ENCODE measurements at regions of chr9 and their contacts with region 1.

Region 1: DNA sequence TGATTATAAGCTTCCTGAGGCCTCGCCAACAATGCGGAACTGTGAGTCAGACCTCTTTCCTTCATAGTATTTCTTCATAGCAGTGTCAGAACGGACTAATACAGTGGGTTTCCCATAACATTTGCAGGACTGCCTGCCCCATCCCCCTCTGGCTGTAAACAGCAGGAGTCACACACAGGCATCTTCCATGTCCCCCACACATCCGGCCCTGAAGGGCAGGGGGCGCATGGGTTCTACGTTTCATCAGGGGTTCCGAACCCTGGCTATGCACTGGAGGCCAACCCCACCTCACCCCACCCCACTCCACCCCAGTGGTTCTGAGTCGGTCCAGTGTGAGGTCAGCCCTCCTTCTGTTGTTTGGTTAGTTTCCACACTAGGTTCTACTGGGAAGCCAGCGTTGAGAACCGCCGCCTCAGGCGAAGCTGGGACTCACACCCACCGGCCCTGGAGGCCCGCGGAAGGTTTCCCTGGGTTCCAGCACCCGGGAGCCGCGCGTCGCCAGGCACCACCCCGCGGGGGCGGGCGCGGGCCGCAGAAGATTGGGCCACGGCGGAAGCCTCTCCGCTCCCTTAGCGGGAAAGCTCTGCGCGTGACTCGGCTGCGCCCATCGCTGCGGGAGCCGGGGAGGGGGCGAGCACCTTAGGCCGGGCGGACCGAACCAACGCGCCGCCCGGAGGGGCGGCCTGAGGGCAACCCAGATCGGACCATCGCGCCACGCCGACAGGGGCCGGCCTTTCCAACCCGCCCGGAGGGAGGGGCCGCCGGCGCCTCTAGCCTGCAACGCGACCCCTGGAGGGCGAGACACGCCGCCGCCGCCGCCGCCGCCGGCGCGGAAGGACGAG is at the start of gene RUSC2:
- DNase-seq: peak; percentile 67
- H3K4me3 ChIP-seq: peak within 1 kb of the TSS; percentile 60 to 69
- H3K27ac ChIP-seq: peak within 1 kb of the TSS; percentile 84 to 91
- H3K4me1 ChIP-seq: no peaks in the 10 kb centered on the region
- H3K27me3 ChIP-seq: no peaks in the 10 kb centered on the region
- CTCF ChIP-seq: peak in 3 of 4 experiments; percentile 30 to 47 (median 44)
- POLR2A ChIP-seq: peak; percentile 67
- total RNA-seq, gene RUSC2: 13.6 to 33.1 TPM

Region 2: GRCh38 chr9:34899535-34900158 is 589.9 kb before region 1 on chr9:
- intact Hi-C with region 1: loop called (anchors 10 kb)
- DNase-seq: peak; percentile 67
- H3K4me3 ChIP-seq: no peak overlapping the region
- H3K27ac ChIP-seq: no peak overlapping the region
- H3K4me1 ChIP-seq: no peaks in the 10 kb centered on the region
- H3K27me3 ChIP-seq: no peaks in the 10 kb centered on the region
- CTCF ChIP-seq: peak; percentile 46 to 83 (median 70)
- POLR2A ChIP-seq: no peak

Region 3: DNA sequence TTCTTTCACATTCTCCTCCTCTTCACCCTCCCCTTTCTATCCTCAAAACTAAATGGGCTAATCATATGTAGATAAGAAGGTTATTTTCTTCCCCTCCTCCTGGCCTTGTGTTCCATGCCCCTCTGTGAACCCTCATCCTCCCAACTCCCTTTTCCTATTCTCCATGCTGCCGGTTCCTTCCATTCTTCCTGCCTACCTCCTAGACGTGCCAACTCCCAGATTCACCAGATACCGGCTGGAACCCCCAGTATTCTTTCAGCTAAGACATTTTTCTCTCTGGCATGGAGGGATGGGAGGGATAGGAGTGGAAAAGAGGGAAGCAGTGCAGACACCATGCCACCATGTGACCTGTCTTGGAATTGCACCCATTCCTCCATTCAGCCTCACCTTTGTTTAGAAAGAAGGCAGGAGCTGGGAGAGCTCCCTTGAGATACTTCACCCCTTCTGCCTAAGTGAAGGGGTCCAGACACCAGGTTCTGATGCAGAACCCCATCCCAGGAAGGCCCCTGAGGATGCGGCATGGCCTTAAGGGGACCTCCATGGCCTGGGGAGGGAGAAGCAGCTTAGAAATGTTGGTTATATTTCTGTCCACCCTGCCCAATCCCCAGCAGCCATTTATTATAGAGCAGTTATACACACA is 495.2 kb before region 1 on chr9:
- intact Hi-C with region 1: loop called (anchors 10 kb)
- DNase-seq: peak; percentile 34
- H3K4me3 ChIP-seq: no peak overlapping the region
- H3K27ac ChIP-seq: peak overlapping the region; percentile 74 to 93
- H3K4me1 ChIP-seq: no peaks in the 10 kb centered on the region
- H3K27me3 ChIP-seq: no peaks in the 10 kb centered on the region
- CTCF ChIP-seq: peak in 3 of 4 experiments; percentile 33 to 58 (median 56)
- POLR2A ChIP-seq: no peak

Region 4: DNA sequence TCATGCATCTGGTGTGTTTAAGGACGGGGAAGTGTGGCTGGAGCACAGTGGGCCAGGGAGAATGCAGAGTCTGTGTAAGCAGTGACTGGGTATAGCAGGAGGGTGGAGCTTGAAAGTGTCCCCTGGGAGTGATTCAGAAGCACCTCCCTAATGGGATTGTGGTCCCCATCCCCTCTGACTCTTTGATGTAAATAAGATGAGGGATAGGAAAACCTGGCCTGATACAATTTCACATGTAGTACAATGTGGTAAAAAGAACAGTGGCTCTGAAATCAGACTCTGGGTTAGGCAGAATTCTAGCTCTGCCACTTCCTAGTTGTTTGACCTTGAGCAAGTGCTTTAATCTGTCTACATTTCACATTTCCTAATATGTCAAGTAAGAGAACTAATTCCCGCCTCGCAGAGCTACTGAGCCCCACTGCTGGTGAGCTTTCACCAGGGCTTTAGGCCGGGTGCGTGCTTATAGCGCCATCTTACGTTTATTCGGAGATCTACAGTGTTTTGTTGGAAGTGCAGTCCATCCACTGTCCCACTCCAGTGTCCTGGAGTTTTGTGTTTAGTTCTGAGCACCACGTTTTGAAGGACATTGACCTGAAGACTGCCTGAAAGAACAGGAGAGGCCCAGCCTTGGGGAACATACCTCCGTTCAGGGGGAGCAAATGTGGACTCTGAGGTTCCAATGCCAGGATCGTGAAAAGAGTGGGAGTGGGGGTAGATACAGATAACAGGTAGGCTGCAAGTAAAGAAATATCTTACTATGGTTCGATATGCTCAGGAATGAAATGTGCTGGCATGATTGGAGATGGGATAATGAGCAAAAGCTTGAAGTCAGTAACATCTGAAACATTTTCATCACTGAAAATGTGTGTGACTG is 64.4 kb after region 1 on chr9:
- intact Hi-C with region 1: loop called (anchors 2 kb)
- DNase-seq: peak; percentile 44
- H3K4me3 ChIP-seq: no peak overlapping the region
- H3K27ac ChIP-seq: peak overlapping the region in 1 of 2 donors; percentile 61
- H3K4me1 ChIP-seq: no peaks in the 10 kb centered on the region
- H3K27me3 ChIP-seq: no peaks in the 10 kb centered on the region
- CTCF ChIP-seq: peak; percentile 31 to 84 (median 82)
- POLR2A ChIP-seq: no peak

Region 5: GRCh38 chr9:35603987-35604577 is 114.5 kb after region 1 on chr9:
- intact Hi-C with region 1: loop called (anchors 2 kb)
- DNase-seq: peak; percentile 100
- H3K4me3 ChIP-seq: peak overlapping the region; percentile 79 to 82
- H3K27ac ChIP-seq: peak overlapping the region; percentile 94
- H3K4me1 ChIP-seq: peaks cover 13% of the 10 kb centered on the region
- H3K27me3 ChIP-seq: no peaks in the 10 kb centered on the region
- CTCF ChIP-seq: peak; percentile 90 to 99 (median 99)
- POLR2A ChIP-seq: peak; percentile 90

Region 6: GRCh38 chr9:35646533-35647265 is 157.2 kb after region 1 on chr9:
- intact Hi-C with region 1: loop called (anchors 10 kb)
- DNase-seq: peak; percentile 91
- H3K4me3 ChIP-seq: peak overlapping the region; percentile 41 to 52
- H3K27ac ChIP-seq: peak overlapping the region; percentile 84 to 86
- H3K4me1 ChIP-seq: peaks cover 4% of the 10 kb centered on the region
- H3K27me3 ChIP-seq: no peaks in the 10 kb centered on the region
- CTCF ChIP-seq: peak; percentile 89 to 99 (median 95)
- POLR2A ChIP-seq: peak; percentile 85

Region 7: GRCh38 chr9:35972093-35972492 is 482.6 kb after region 1 on chr9:
- intact Hi-C with region 1: no loop called
- DNase-seq: no peak
- H3K4me3 ChIP-seq: no peak overlapping the region
- H3K27ac ChIP-seq: no peak overlapping the region
- H3K4me1 ChIP-seq: no peaks in the 10 kb centered on the region
- H3K27me3 ChIP-seq: no peaks in the 10 kb centered on the region
- CTCF ChIP-seq: no peak
- POLR2A ChIP-seq: no peak

Measured in prostate gland (tissue), 2 donors.